Astrocyte of the cerebellum (primary cell): ENCODE measurements at regions of chr2 and their contacts with region 1.

Region 1: DNA sequence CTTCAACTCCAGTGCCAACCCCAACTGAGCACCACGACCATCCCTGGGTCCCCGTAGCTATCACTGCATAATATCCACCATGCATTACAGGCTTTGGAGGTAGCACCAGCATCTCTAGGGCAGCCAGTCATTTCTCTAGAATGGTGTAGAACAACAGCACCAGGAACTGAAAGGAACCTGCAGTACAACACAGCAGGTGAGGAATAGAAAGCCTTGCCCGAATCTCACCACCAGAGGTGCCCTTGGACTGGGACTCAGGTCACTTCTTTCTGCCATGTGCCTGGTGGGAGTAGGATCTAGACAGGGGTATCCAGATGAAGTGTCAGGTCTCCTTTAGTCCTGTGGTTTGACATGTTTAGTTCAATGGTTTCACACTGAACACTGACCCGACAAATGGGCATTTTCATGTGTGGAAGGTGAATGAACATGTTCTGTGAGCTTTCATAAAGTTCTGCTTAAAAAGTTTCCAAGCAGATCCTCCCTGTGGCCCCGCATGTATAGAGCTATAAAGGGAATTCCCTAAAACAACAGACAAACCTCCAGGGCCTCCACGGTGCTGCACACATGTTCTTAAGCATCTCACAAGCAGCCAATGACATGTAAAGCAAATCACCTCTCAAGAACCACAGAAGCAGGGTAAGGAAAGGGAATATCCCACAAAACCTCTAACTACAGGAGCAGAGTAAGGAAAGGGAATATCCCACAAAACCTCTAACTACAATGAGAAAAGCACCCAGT is 208.3 kb downstream of the AFF3 start:
- DNase-seq: no peak
- H3K4me3 ChIP-seq: no peak overlapping the region
- CTCF ChIP-seq: no peak

Region 2: GRCh38 chr2:99861376-99861760 is 72.7 kb before region 1 on chr2:
- in situ Hi-C with region 1: no loop called
- DNase-seq: no peak
- H3K4me3 ChIP-seq: no peak overlapping the region
- CTCF ChIP-seq: no peak

Region 3: DNA sequence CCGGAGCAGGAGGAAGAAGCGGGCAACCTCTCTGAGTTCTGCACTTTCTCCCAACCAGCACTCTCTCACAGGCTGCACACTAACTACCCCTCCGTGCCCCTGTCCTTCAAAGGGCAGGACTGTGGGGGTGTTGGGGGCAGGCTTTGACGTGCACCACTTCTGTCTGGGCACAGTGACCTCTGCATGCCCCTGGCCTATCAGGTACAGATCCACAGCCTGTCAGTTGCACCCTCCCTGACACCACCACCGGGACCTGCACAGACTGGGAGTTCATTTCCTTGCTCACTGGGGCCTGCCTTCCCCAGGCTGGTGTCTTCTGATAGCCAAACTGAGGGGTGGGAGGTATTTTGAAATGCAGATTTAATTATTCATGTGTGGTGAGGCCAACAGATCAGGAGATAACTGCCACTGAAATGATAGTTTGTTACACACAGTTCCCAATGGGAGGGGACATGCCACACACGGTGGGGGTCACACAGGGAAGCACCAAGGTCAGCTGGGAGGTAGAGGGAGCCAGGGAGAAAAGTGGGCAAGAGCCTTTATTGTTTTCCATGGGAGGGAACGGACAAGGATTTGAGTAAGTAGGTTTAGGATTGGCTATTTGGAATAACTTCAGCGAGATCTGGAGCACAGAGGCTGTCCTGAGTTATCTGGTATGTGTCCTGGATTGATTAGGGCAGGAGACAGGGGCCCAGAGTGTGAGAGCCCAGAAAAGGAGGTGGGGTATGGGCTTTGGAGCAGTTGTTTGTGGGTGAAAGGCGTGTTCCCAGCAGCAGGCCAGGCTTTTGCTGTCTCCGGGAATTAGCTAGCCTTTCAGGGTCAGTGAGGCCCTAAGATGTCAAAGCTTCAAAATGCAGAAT is 43.3 kb before region 1 on chr2:
- in situ Hi-C with region 1: loop called (anchors 5 kb)
- DNase-seq: no peak
- H3K4me3 ChIP-seq: no peak overlapping the region
- CTCF ChIP-seq: no peak

Region 4: GRCh38 chr2:99988599-99988998 is 54.5 kb after region 1 on chr2:
- in situ Hi-C with region 1: no loop called
- DNase-seq: no peak
- H3K4me3 ChIP-seq: no peak overlapping the region
- CTCF ChIP-seq: no peak